Heart left ventricle (tissue), 16 donors: ENCODE measurements at regions of chr19 and their contacts with region 1.

Region 1: GRCh38 chr19:709965-710571 is 1.3 kb downstream of the PALM start:
- DNase-seq: peak; percentile 59 to 84 (median 69)
- ATAC-seq: peak; percentile 24 to 72 (median 64)
- H3K4me3 ChIP-seq: peak overlapping the region; percentile 47 to 97 (median 77)
- H3K27ac ChIP-seq: peak overlapping the region; percentile 51 to 96 (median 88)
- H3K4me1 ChIP-seq: peaks cover 0 to 32% (median 8%) of the 10 kb centered on the region in 12 donors
- H3K27me3 ChIP-seq: peaks cover 0 to 18% (median 0%) of the 10 kb centered on the region in 9 donors
- CTCF ChIP-seq: no peak
- POLR2A ChIP-seq: no peak

Region 2: GRCh38 chr19:726993-727956 is 17.2 kb after region 1 on chr19:
- intact Hi-C with region 1: loop called in 1 of 10 experiments (anchors 2 kb)
- DNase-seq: no peak
- ATAC-seq: peak in 2 of 4 donors; percentile 20 to 31
- H3K4me3 ChIP-seq: peak overlapping the region in 1 of 12 donors; percentile 11
- H3K27ac ChIP-seq: peak overlapping the region; percentile 60 to 92 (median 84)
- H3K4me1 ChIP-seq: peaks cover 0 to 32% (median 20%) of the 10 kb centered on the region in 12 donors
- H3K27me3 ChIP-seq: peaks cover 0 to 3% (median 0%) of the 10 kb centered on the region in 9 donors
- CTCF ChIP-seq: no peak
- POLR2A ChIP-seq: no peak